ENCODE measurements at regions of chr19 and their contacts with region 1.

Region 1: GRCh38 chr19:33778089-33778791 is 18.4 kb upstream of the KCTD15 start:
- ATAC-seq: peak; percentile 77 to 89 (median 84)
- H3K4me3 ChIP-seq: peak overlapping the region in 4 of 5 donors; percentile 9 to 16 (median 12)
- H3K27ac ChIP-seq: no peak overlapping the region
- H3K4me1 ChIP-seq: peaks cover 16 to 28% of the 10 kb centered on the region in 2 donors

Region 2: DNA sequence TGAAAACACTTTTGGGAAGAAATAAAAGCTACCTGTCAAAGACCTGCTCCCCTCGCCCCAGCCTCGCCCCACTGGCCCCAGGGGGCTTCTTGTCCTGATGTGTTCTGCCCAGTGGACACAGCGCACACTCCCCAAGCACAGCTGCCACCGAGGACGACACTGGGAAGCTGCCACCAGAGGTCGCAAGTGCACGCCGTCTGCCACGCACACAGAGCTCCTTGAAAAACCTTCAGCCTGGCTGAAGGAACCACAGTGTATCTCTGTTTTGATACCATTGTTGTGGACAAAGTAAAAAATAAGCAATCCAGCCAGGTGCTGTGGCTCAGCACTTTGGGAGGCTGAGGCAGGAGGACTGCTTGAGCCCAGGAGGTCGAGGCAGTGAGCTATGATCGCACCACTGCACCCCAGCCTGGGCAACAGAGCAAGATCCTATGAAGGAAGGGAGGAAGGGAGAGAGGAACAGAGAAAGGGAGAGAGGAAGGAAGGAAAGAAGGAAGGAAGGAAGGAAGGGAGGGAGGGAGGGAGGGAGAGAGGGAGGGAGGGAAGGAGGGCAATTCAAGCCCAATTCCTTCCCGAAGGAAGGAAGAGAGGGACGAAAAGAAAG is 347.5 kb before region 1 on chr19:
- in situ Hi-C with region 1: loop called in 7 of 9 experiments (anchors 10 to 25 kb)
- ATAC-seq: peak; percentile 53 to 72 (median 60)
- H3K4me3 ChIP-seq: no peak overlapping the region
- H3K27ac ChIP-seq: no peak overlapping the region
- H3K4me1 ChIP-seq: peaks cover 59 to 80% of the 10 kb centered on the region in 2 donors

Region 3: DNA sequence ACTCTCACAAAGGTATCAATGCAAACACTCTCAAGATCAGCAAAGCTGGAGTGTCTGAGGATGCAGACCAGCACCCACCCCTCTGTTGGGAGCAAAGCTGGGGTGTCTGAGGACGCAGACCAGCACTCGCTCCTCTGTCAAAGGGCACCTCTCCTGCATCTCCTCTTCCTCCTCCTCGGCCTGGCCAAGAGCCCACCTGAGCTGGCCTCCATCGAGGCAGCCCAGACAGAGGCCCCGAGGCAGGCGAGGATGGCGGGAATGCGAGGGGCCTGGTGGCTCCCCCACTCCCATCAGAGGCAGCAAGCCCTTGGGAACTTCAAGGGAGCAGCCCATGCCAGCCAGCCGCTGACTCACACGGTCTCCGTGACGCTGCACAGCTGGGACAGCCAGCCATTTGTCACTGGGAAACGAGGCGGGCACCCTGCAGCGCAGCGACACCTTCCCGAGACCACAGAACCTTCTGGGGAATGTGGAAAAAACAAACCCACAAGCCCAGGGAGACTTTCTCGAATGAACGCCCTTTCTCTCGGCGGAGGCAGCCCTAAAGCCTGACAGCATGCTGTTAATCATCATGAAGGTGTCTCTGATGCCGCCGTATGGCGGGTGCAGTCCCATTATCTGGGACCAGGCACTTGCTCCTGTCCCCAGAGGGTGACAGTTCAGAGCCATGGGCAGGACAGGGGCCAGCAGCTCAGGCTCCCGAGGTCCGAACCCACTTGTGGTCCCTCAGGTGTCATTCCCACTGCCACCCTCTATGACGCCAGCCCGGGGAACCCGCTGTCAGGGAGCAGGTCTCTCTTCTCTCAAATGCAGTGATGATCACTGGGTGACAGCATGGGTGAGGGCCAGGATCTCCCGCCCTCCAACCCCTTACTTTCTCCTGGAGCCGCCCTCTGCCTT is 309.7 kb before region 1 on chr19:
- in situ Hi-C with region 1: no loop called
- ATAC-seq: peak in 5 of 8 experiments; percentile 69 to 88 (median 80)
- H3K4me3 ChIP-seq: no peak overlapping the region
- H3K27ac ChIP-seq: peak overlapping the region; percentile 13 to 62
- H3K4me1 ChIP-seq: peaks cover 29 to 38% of the 10 kb centered on the region in 2 donors

Region 4: GRCh38 chr19:33998739-33999345 is 220.6 kb after region 1 on chr19:
- in situ Hi-C with region 1: loop called in 3 of 9 experiments (anchors 25 kb)
- ATAC-seq: no peak
- H3K4me3 ChIP-seq: no peak overlapping the region
- H3K27ac ChIP-seq: no peak overlapping the region
- H3K4me1 ChIP-seq: no peaks in the 10 kb centered on the region

Region 5: DNA sequence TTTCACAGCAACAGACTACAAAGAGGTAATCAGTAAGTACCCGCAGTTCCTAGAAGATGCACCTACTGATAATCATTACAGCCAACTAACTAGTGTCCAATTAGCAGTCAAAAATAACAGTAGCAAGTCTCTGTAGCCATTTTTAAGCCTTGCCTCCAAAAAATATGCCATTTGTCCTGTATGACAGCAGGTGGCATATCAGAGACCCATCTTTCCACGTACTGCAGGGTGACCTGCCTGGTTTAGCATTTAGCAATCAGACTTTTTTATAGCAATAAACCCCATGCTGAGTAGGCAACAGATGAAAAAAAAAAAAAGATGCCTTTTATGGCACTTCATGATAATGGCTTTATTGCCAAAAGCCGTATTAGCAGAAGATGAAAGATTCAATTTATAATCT is 238.8 kb after region 1 on chr19:
- in situ Hi-C with region 1: loop called in 2 of 9 experiments (anchors 25 kb)
- ATAC-seq: no peak
- H3K4me3 ChIP-seq: no peak overlapping the region
- H3K27ac ChIP-seq: no peak overlapping the region
- H3K4me1 ChIP-seq: no peaks in the 10 kb centered on the region

Region 6: DNA sequence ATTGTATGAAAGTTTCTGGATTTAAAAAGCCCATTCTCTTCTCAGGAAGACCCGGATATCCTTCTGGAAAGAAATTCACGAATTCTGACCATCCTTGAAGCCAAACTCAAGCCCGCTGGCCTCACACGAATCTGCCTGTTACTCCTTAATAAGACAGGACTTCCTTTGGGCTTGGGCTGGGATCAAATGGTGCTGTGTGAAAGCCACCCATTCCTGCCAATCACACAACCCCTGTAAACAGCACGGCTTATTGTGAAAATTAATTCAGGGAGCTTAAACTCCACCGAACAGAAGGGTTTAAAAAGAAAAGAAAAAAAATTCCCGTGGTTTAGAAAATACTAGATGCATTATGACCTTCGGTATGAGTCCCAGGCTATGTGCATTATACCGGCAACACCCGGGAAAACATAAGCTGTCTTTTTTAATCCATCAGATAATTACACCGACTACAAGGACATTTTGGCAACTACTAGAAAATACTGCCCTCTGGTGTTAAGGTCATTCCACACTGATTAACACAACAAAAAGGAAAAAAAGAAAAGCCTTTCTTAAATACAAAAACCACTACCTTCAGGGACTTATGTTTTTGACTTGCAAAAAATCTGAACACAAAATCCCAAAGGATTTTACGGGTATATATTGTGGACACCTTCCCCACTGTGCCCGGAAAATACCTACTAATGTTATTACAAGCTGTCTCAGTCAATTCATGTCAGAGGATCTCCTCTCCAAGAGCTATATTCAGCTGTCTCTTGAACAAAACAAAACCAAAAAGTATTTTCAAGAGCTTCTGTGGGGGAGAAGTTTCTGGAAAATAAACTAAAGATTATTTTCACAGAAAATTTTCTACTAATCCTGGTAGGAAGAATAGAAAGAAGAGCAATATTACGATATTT is 318.0 kb after region 1 on chr19:
- in situ Hi-C with region 1: loop called (anchors 5 to 25 kb)
- ATAC-seq: peak; percentile 66 to 96 (median 79)
- H3K4me3 ChIP-seq: no peak overlapping the region
- H3K27ac ChIP-seq: no peak overlapping the region
- H3K4me1 ChIP-seq: peaks cover 0 to 4% of the 10 kb centered on the region in 2 donors

Region 7: GRCh38 chr19:34145741-34146202 is 367.5 kb after region 1 on chr19:
- in situ Hi-C with region 1: loop called in 1 of 9 experiments (anchors 10 kb)
- ATAC-seq: peak; percentile 56 to 77 (median 66)
- H3K4me3 ChIP-seq: no peak overlapping the region
- H3K27ac ChIP-seq: no peak overlapping the region
- H3K4me1 ChIP-seq: no peaks in the 10 kb centered on the region